ENCODE measurements at regions of chr6 and their contacts with region 1.

Region 1: GRCh38 chr6:70059039-70059719 is 192.8 kb downstream of the COL19A1 start:
- DNase-seq: no peak

Region 2: DNA sequence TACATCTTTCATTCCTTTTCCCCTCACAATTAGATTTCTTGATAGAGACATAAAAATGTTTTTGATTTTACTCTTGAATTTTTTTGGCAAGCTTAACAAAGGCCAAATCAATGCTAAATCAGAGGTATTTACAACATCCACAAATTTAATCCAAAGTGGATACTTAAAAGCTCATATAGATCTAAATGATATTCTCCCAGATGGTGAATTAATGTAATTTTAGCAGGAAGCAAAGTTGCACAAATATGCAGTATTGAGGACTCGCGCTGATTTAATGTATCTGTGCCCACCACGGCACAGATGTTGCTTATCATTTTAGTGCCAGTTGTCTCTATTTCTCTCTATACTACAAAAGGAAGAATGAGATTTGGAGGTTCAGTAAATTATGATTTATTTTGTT is 25.4 kb before region 1 on chr6:
- intact Hi-C with region 1: loop called in 1 of 2 experiments (anchors 1 kb)
- DNase-seq: no peak

Region 3: GRCh38 chr6:70131528-70131927 is 72.3 kb after region 1 on chr6:
- intact Hi-C with region 1: no loop called
- DNase-seq: no peak

Region 4: DNA sequence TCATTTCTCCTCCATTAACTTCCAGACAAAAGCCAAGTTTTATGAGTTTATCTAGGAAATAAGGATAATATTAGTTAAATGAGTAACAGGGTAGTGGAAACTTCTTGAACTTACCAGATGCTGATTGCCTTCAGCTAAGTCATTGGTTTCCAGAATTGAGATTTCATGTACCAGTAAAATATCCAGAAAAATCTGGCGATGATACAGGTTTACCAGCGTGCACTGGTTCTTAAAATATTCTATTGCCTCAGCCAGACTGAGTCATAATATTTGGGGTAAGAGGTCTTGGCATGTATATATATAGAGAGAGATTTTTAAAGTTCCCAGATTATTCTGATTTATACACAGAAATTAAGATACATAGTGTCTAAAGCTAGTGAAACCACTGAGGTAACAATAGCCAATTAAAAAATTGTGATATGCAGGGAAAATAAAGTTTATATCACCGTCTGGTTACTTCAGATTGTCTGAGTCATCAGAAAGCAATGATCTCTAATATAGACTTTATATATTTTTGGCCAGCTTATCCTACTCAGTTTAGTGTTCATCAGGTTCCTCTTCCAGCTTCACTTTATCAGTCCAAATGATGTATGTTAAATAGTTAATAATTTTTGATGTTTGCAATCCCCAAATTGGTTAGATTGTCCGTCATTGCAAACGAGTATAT is 468.0 kb after region 1 on chr6:
- intact Hi-C with region 1: no loop called
- DNase-seq: no peak